Heart left ventricle (tissue), 16 donors: ENCODE measurements at regions of chr7 and their contacts with region 1.

Region 1: GRCh38 chr7:90244909-90245851 is at the start of gene CFAP69:
- DNase-seq: peak; percentile 90 to 93 (median 91)
- ATAC-seq: peak; percentile 89 to 99 (median 98)
- H3K4me3 ChIP-seq: peak within 1 kb of the TSS; percentile 72 to 97 (median 86)
- H3K27ac ChIP-seq: peak within 1 kb of the TSS in 6 of 12 donors; percentile 22 to 75 (median 38)
- H3K4me1 ChIP-seq: peaks cover 0 to 19% (median 13%) of the 10 kb centered on the region in 12 donors
- H3K27me3 ChIP-seq: peaks cover 0 to 9% (median 0%) of the 10 kb centered on the region in 9 donors
- CTCF ChIP-seq: peak in 6 of 12 donors; percentile 21 to 35 (median 27)
- POLR2A ChIP-seq: no peak
- total RNA-seq, gene CFAP69: 1.3 to 4.5 (median 2.7) TPM

Region 2: DNA sequence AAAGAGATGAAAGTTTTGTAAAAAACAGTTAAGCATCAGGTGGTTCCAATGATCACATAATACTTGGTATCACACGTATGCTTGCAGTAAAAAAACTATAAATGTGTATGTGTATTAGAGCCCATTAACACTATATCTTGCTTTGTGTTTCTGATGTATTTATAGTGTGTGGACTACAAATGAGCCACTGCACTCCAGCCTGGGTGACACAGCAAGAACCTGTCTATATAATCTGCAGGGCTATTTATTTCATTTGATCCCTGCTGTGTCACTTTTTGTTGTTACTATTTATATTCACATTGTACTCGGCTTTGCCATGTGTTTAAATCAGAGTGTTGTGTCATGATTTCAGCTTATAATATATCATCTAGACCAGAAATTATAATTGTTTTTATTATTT is 961.9 kb before region 1 on chr7:
- intact Hi-C with region 1: no loop called
- DNase-seq: no peak
- ATAC-seq: peak in 3 of 4 donors; percentile 58 to 66 (median 62)
- H3K4me3 ChIP-seq: no peak overlapping the region
- H3K27ac ChIP-seq: no peak overlapping the region
- H3K4me1 ChIP-seq: no peaks in the 10 kb centered on the region
- H3K27me3 ChIP-seq: no peaks in the 10 kb centered on the region
- CTCF ChIP-seq: no peak
- POLR2A ChIP-seq: no peak

Region 3: DNA sequence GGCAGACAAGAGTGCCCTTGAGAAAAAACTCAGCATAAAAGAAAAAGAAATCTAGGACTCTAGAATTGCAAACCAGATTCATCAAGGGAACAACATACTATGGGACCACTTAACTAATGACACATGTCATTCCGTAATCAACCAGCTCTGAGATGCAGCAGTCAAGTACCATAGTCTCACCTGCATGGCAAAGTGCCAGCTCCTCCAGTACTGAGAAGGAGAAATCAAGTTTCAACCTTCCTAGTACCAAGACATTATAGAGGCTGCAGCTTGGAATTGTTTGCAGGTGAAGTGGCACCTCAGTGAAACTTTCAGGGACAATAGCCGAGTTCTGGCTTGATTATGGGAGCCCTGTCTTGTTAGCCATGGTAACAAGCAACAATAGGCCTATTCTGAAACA is 79.5 kb before region 1 on chr7:
- intact Hi-C with region 1: loop called in 1 of 10 experiments (anchors 10 kb)
- DNase-seq: no peak
- ATAC-seq: no peak
- H3K4me3 ChIP-seq: no peak overlapping the region
- H3K27ac ChIP-seq: no peak overlapping the region
- H3K4me1 ChIP-seq: no peaks in the 10 kb centered on the region
- H3K27me3 ChIP-seq: peaks cover 0 to 6% (median 0%) of the 10 kb centered on the region in 9 donors
- CTCF ChIP-seq: no peak
- POLR2A ChIP-seq: no peak

Region 4: DNA sequence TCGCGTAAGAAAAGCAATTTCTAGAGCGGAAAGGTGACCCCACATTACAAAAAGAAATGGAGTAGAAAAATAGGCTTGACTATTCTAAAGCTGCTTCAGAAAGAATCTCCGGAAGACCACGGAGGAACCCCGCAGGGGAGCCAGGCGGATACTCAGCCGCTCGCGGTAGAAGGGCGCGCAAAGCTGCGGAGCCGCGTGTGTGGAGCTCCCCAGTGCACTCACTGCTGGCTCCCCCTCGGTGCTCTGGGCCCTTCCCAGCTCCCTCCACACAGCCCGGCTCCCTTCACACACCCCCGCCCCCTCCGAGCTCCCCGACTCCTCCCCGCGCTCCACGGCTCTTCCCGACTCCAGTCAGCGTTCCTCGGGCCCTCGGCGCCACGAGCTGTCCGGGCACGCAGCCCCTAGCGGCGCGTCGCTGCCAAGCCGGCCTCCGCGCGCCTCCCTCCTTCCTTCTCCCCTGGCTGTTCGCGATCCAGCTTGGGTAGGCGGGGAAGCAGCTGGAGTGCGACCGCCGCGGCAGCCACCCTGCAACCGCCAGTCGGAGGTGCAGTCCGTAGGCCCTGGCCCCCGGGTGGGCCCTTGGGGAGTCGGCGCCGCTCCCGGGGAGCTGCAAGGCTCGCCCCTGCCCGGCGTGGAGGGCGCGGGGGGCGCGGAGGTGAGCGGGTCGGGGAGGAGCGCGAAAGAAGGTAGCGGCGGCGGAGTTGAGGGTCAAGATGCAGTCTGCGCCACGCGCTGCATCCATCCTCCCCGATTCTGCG is 33.6 kb before region 1 on chr7 and contains the start of gene STEAP2:
- intact Hi-C with region 1: loop called in 1 of 10 experiments (anchors 5 kb)
- DNase-seq: peak; percentile 81 to 95 (median 90)
- ATAC-seq: peak; percentile 96 to 100 (median 99)
- H3K4me3 ChIP-seq: peak within 1 kb of the TSS; percentile 59 to 77 (median 69)
- H3K27ac ChIP-seq: peak within 1 kb of the TSS; percentile 55 to 87 (median 74)
- H3K4me1 ChIP-seq: peaks cover 0 to 18% (median 5%) of the 10 kb centered on the region in 12 donors
- H3K27me3 ChIP-seq: peaks cover 0 to 33% (median 0%) of the 10 kb centered on the region in 9 donors
- CTCF ChIP-seq: peak in 11 of 12 donors; percentile 29 to 68 (median 47)
- POLR2A ChIP-seq: peak in 1 of 2 donors; percentile 30
- total RNA-seq, gene STEAP2: 6.2 to 16.7 (median 9.1) TPM